Activated CD4-positive, alpha-beta T cell treated with anti-CD3 and anti-CD28 coated beads for 36 hours (primary cell): ENCODE measurements at regions of chr1 and their contacts with region 1.

Region 1: GRCh38 chr1:91712981-91713841 is 172.7 kb downstream of the TGFBR3 start:
- DNase-seq: peak; percentile 75
- ATAC-seq: peak; percentile 91
- H3K4me3 Mint-ChIP-seq: peak overlapping the region; percentile 6
- H3K27ac Mint-ChIP-seq: peak overlapping the region; percentile 72
- H3K4me1 Mint-ChIP-seq: peaks cover 30% of the 10 kb centered on the region
- H3K27me3 Mint-ChIP-seq: no peaks in the 10 kb centered on the region

Region 2: DNA sequence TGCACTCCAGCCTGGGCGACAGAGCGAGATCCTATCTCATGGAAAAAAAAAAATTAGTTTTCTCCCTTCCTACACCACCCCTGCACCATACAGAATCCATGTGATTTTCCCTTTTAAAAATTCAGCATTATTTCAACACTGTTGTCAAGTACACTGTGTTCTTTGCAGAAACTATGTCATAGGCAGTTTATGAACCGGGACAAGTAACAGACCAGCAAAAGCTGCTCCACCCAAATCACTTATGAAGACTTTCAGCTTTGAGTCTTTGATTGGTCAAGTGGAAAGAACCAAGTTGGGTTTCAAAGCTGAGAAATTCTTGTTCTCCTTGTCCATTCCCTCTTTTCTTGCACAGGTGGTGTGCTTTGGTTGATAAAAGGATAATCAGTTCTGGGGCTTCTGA is 39.6 kb before region 1 on chr1:
- CTCF ChIA-PET with region 1: no interaction called
- POLR2A ChIA-PET with region 1: no interaction called
- intact Hi-C with region 1: loop called (anchors 1 to 2 kb)
- DNase-seq: no peak
- ATAC-seq: no peak
- H3K4me3 Mint-ChIP-seq: no peak overlapping the region
- H3K27ac Mint-ChIP-seq: peak overlapping the region; percentile 84
- H3K4me1 Mint-ChIP-seq: peaks cover 34% of the 10 kb centered on the region
- H3K27me3 Mint-ChIP-seq: no peaks in the 10 kb centered on the region

Region 3: DNA sequence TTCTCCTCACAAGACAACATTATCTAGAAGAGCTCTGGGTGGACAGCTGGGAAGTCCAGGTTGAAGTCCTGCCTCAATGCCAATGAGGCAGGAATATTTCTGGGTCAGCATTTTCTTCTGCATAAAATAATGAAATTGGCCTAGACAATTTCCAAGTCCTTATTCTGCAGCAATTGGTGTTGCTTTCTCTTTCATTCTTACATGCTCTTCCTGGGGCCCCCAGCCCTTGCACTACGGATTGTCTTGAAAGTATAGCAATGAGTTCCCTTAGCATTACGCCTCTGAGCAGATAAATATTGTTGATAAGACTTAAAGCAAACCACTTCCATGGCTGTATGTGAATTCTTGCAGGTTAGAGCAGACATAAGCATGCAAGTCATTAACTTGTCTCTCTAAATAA is 15.8 kb before region 1 on chr1:
- CTCF ChIA-PET with region 1: interaction called, 3 read pairs
- POLR2A ChIA-PET with region 1: no interaction called
- intact Hi-C with region 1: loop called in 1 of 2 experiments (anchors 1 kb)
- DNase-seq: peak; percentile 72
- ATAC-seq: peak; percentile 95
- H3K4me3 Mint-ChIP-seq: peak overlapping the region; percentile 30
- H3K27ac Mint-ChIP-seq: peak overlapping the region; percentile 78
- H3K4me1 Mint-ChIP-seq: peaks cover 33% of the 10 kb centered on the region
- H3K27me3 Mint-ChIP-seq: no peaks in the 10 kb centered on the region

Region 4: GRCh38 chr1:91732291-91733107 is 19.3 kb after region 1 on chr1:
- CTCF ChIA-PET with region 1: interaction called, 3 read pairs
- POLR2A ChIA-PET with region 1: no interaction called
- intact Hi-C with region 1: loop called (anchors 1 kb)
- DNase-seq: peak; percentile 58
- ATAC-seq: peak; percentile 47
- H3K4me3 Mint-ChIP-seq: no peak overlapping the region
- H3K27ac Mint-ChIP-seq: peak overlapping the region; percentile 89
- H3K4me1 Mint-ChIP-seq: peaks cover 48% of the 10 kb centered on the region
- H3K27me3 Mint-ChIP-seq: peaks cover 5% of the 10 kb centered on the region

Region 5: DNA sequence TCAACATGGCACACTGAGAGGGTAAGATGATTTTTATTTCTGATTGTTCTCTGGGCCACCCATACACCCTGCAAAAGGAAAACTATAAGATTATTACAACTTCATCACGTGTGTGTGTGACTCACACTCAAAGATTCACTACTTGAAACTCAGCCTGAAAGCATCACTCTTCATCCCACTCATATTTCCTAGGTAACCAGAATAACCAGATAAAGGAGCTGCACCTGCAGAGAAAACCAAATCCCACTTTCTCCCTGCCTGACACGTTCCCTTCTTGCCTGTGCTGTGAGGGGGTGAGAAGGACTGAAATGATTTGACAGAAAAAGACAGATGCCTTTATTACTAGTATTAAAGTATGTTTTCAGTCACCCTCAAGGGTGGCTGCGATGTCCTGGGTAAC is 41.1 kb after region 1 on chr1:
- CTCF ChIA-PET with region 1: no interaction called
- POLR2A ChIA-PET with region 1: no interaction called
- intact Hi-C with region 1: loop called (anchors 1 kb)
- DNase-seq: peak; percentile 75
- ATAC-seq: peak; percentile 87
- H3K4me3 Mint-ChIP-seq: peak overlapping the region; percentile 21
- H3K27ac Mint-ChIP-seq: peak overlapping the region; percentile 82
- H3K4me1 Mint-ChIP-seq: peaks cover 43% of the 10 kb centered on the region
- H3K27me3 Mint-ChIP-seq: peaks cover 7% of the 10 kb centered on the region

Region 6: GRCh38 chr1:92583821-92584760 is 870.9 kb after region 1 on chr1:
- CTCF ChIA-PET with region 1: no interaction called
- POLR2A ChIA-PET with region 1: no interaction called
- intact Hi-C with region 1: loop called in 1 of 2 experiments (anchors 5 kb)
- DNase-seq: no peak
- ATAC-seq: peak; percentile 60
- H3K4me3 Mint-ChIP-seq: peak overlapping the region; percentile 68
- H3K27ac Mint-ChIP-seq: peak overlapping the region; percentile 92
- H3K4me1 Mint-ChIP-seq: peaks cover 79% of the 10 kb centered on the region
- H3K27me3 Mint-ChIP-seq: no peaks in the 10 kb centered on the region